K562 (cell line): ENCODE measurements at regions of chr1 and their contacts with region 1.

Region 1: GRCh38 chr1:110070685-110071242 is 292 bp upstream of the ALX3 start:
- DNase-seq: no peak
- ATAC-seq: no peak
- H3K4me3 ChIP-seq: no peak overlapping the region
- H3K27ac ChIP-seq: no peak overlapping the region
- H3K4me1 ChIP-seq: peaks cover 0 to 8% of the 10 kb centered on the region in 2 experiments; a peak in 1 of 5 replicates
- H3K27me3 ChIP-seq: peaks cover 11 to 32% of the 10 kb centered on the region in 2 experiments; a peak in 4 of 5 replicates
- CTCF ChIP-seq: no peak
- EP300 ChIP-seq: no peak
- POLR2A ChIP-seq: no peak
- RAD21 ChIP-seq: no peak

Region 2: GRCh38 chr1:110082477-110082876 is 11.7 kb after region 1 on chr1:
- CTCF ChIA-PET with region 1: no interaction called
- POLR2A ChIA-PET with region 1: interaction called, 12 read pairs
- in situ Hi-C with region 1: no loop called
- intact Hi-C with region 1: no loop called
- DNase-seq: no peak
- ATAC-seq: peak; percentile 33
- H3K4me3 ChIP-seq: no peak overlapping the region
- H3K27ac ChIP-seq: no peak overlapping the region
- H3K4me1 ChIP-seq: peaks cover 0 to 12% of the 10 kb centered on the region in 2 experiments; a peak in 1 of 5 replicates
- H3K27me3 ChIP-seq: peaks cover 30 to 64% of the 10 kb centered on the region in 2 experiments
- CTCF ChIP-seq: no peak
- EP300 ChIP-seq: no peak
- POLR2A ChIP-seq: no peak
- RAD21 ChIP-seq: no peak